ENCODE measurements at regions of chr13 and their contacts with region 1.

Region 1: GRCh38 chr13:107608736-107609135 is 606.6 kb downstream of the LIG4 start:
- DNase-seq: no peak
- ATAC-seq: no peak
- H3K4me3 ChIP-seq: no peak overlapping the region
- H3K27ac ChIP-seq: no peak overlapping the region
- H3K4me1 ChIP-seq: no peaks in the 10 kb centered on the region
- H3K27me3 ChIP-seq: no peaks in the 10 kb centered on the region
- CTCF ChIP-seq: no peak
- POLR2A ChIP-seq: no peak
- RAD21 ChIP-seq: no peak

Region 2: GRCh38 chr13:107625648-107626047 is 16.9 kb after region 1 on chr13:
- CTCF ChIA-PET with region 1: interaction called, 3 read pairs
- POLR2A ChIA-PET with region 1: no interaction called
- dilution Hi-C with region 1: no loop called
- in situ Hi-C with region 1: no loop called
- intact Hi-C with region 1: loop called (anchors 2 kb)
- DNase-seq: no peak
- ATAC-seq: no peak
- H3K4me3 ChIP-seq: no peak overlapping the region
- H3K27ac ChIP-seq: no peak overlapping the region
- H3K4me1 ChIP-seq: 0 out of 2 replicates have a peak, but pooled peaks cover 2% of the 10 kb centered on the region
- H3K27me3 ChIP-seq: no peaks in the 10 kb centered on the region
- CTCF ChIP-seq: no peak
- POLR2A ChIP-seq: no peak
- RAD21 ChIP-seq: no peak